Pancreas (tissue), 10 donors: ENCODE measurements at regions of chr11 and their contacts with region 1.

Region 1: GRCh38 chr11:86938900-86939880 is 16.0 kb downstream of the FZD4 start:
- DNase-seq: no peak
- ATAC-seq: peak; percentile 51 to 71 (median 68)
- H3K4me3 ChIP-seq: no peak overlapping the region
- H3K27ac ChIP-seq: peak overlapping the region in 2 of 4 donors; percentile 63
- H3K4me1 ChIP-seq: peaks cover 19 to 26% (median 25%) of the 10 kb centered on the region in 3 donors
- H3K27me3 ChIP-seq: no peaks in the 10 kb centered on the region
- CTCF ChIP-seq: peak; percentile 50 to 60 (median 58)

Region 2: DNA sequence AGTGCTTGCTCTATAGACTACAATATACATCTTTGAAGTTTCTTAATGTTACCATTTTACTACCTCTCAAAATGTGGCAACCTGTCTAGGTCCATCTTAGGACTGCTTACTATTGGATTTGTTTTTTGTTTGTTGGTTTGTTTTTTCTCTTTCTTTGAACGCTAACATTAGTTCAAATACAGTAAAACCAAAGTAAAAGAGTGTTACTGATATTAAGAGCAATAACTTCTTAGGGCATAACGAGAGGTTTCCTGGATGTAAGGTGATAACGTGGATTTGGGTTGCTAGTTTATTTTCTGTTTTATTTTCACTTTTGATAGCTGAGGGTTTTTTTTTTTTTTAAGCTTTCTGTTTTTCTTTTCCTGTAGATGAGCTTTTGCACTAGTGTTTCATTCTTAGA is 142.2 kb after region 1 on chr11:
- intact Hi-C with region 1: no loop called
- DNase-seq: no peak
- ATAC-seq: no peak
- H3K4me3 ChIP-seq: no peak overlapping the region
- H3K27ac ChIP-seq: no peak overlapping the region
- H3K4me1 ChIP-seq: no peaks in the 10 kb centered on the region
- H3K27me3 ChIP-seq: no peaks in the 10 kb centered on the region
- CTCF ChIP-seq: no peak

Region 3: DNA sequence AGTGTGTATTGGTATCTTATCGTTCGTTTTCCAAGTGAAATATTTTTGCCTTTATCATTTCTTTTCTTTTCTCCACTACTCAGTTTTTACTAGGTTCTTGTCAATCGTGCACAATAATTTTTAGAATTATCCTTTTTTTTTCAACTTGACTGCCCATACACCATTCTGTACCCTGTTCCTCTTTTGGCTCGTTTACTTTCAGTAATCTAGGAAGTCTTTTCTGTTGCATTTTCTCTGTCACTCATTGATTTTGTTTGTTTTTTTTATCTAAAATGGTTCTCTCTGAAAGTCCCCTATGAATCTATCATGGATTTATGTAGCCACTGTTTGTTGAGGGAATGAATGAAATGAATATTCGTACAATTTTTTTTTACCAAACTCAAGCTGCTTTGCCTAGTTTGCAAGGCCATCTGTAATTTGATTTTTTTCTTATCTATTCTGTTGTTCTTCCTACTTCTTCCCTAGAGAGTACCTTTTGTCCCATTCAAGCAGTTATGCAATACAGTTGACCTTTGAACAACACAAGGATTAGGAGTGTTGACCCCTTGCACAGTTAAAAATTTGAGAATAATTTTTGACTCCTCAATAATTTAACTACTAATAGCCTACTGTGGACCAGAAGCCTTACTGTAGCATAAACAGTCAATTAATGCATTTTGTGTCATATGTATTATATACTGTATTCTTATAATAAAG is 264.9 kb after region 1 on chr11:
- intact Hi-C with region 1: no loop called
- DNase-seq: no peak
- ATAC-seq: no peak
- H3K4me3 ChIP-seq: no peak overlapping the region
- H3K27ac ChIP-seq: no peak overlapping the region
- H3K4me1 ChIP-seq: no peaks in the 10 kb centered on the region
- H3K27me3 ChIP-seq: no peaks in the 10 kb centered on the region
- CTCF ChIP-seq: no peak

Region 4: DNA sequence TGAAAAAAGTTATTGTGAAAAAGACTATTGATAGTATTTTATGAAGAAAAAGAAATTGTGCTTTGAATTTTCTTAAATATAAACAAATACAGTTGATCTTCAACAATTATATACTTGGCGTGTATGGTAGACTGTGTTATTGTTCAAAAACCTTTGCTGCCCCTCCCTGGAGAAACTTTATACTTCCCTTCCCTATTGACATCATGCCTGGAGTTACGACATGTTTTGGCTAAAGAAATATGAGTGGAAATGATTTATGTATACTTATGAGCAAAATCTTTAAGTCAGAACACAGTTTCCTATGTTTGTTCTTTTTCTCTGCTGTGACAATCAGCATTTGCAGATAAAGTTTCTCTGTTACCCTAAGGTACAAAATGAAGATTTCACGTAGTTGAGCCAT is 342.3 kb after region 1 on chr11:
- intact Hi-C with region 1: loop called in 1 of 3 experiments (anchors 10 kb)
- DNase-seq: no peak
- ATAC-seq: peak; percentile 64 to 82 (median 68)
- H3K4me3 ChIP-seq: no peak overlapping the region
- H3K27ac ChIP-seq: no peak overlapping the region
- H3K4me1 ChIP-seq: no peaks in the 10 kb centered on the region
- H3K27me3 ChIP-seq: no peaks in the 10 kb centered on the region
- CTCF ChIP-seq: no peak

Region 5: DNA sequence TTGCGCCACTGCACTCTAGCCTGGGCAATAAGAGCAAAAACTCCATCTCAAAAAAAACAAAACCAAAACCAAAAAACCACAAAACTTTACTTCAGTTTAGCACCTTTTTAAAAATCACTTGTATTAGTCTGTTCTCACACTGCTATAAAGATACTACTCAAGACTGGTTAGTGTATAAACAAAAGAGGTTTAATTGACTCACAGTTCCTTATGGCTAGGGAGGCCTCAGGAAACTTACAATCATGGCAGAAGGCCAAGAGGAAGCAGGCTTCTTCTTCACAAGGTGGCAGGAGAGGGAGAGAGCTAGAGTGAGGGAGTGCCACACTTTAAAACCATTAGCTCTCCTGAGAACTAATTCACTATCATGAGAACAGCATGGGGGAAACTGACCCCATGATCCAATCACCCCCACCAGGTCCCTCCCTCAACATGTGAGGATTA is 359.9 kb after region 1 on chr11:
- intact Hi-C with region 1: loop called in 1 of 3 experiments (anchors 5 kb)
- DNase-seq: no peak
- ATAC-seq: no peak
- H3K4me3 ChIP-seq: no peak overlapping the region
- H3K27ac ChIP-seq: no peak overlapping the region
- H3K4me1 ChIP-seq: peaks cover 0 to 5% (median 0%) of the 10 kb centered on the region in 3 donors
- H3K27me3 ChIP-seq: no peaks in the 10 kb centered on the region
- CTCF ChIP-seq: no peak